Activated naive CD4-positive, alpha-beta T cell treated with anti-CD3 and anti-CD28 coated beads for 36 hours (primary cell): ENCODE measurements at regions of chr5 and their contacts with region 1.

Region 1: DNA sequence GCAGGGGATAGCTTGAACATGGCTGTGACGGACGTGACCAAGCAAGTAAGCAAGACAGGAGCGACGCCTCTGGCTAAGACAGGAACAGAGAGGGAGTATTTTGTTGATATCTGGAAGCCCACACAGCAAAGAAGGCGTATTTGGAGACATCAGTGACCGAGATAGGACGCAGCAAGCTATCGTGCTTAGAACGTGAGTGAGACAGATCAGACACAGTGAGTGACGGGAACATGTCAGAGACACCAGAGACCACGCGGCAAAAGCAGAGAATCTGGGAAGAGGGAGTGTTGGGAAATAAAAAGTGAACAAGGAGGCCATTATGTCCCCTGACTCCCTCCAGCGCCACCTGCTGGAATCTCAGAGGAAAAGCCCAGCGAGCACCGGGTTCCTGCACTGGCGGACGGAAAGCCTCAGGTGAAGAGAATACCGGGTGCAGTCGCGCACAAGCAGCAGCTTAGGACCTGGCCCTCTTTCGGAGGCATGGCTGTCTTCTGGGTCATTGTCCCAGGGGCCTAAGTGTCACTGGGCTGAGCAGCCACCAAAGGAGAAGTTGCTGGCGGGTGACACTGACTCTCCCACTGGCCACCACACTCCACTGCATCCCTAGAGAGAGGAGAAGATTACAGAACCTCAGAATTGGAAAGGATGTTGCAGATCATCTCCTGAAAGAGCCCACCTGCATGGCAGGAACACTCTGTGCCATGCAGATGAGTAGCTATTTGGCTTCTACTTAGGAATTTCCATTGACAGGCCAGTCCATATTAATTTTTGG is 99.1 kb downstream of the FBXO38 start:
- DNase-seq: peak; percentile 82
- H3K4me3 Mint-ChIP-seq: no peak overlapping the region
- H3K27ac Mint-ChIP-seq: no peak overlapping the region
- H3K4me1 Mint-ChIP-seq: peaks cover 3% of the 10 kb centered on the region
- H3K27me3 Mint-ChIP-seq: peaks cover 26% of the 10 kb centered on the region

Region 2: DNA sequence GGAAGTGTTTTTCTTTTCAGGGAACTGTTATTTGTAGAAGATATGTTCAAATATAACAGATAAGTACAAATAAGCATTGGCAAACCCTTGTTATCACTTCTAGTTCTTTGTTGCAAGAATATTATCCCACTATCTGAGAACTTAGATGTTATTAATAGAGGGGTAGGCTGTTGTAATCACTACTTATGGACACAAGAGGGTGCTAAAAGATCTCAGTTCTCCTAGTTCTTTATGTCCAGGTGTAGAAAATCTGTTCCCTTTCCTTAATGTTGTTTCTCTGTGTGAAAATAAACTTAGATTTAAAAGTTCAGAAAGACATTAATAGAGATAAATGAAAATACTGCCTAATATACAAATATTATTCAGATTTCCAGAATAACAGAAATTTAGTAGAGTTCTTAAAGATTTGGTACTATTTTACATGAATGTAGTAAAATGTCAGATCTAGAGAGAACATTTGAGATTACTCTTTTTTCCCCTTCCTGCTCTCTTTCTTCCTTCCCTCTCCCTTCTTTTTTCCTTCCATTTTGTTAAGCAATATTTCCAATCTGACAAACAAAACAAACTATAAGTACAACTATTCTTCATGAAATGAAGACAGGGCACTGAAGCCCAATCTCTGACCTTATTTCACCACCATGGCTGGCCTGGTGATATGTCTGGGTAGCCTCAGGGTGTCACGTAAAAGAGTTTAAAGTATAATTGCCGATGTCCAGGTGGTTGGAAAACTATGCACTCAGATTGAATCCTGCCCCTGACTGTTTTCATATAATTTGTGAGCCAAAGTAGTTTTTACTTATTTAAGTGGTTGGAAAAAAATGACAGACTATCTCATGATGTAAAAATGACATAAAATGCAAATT is 532.9 kb before region 1 on chr5:
- CTCF ChIA-PET with region 1: interaction called, 3 read pairs
- intact Hi-C with region 1: loop called (anchors 5 kb)
- DNase-seq: no peak
- H3K4me3 Mint-ChIP-seq: no peak overlapping the region
- H3K27ac Mint-ChIP-seq: no peak overlapping the region
- H3K4me1 Mint-ChIP-seq: no peaks in the 10 kb centered on the region
- H3K27me3 Mint-ChIP-seq: peaks cover 2% of the 10 kb centered on the region

Region 3: DNA sequence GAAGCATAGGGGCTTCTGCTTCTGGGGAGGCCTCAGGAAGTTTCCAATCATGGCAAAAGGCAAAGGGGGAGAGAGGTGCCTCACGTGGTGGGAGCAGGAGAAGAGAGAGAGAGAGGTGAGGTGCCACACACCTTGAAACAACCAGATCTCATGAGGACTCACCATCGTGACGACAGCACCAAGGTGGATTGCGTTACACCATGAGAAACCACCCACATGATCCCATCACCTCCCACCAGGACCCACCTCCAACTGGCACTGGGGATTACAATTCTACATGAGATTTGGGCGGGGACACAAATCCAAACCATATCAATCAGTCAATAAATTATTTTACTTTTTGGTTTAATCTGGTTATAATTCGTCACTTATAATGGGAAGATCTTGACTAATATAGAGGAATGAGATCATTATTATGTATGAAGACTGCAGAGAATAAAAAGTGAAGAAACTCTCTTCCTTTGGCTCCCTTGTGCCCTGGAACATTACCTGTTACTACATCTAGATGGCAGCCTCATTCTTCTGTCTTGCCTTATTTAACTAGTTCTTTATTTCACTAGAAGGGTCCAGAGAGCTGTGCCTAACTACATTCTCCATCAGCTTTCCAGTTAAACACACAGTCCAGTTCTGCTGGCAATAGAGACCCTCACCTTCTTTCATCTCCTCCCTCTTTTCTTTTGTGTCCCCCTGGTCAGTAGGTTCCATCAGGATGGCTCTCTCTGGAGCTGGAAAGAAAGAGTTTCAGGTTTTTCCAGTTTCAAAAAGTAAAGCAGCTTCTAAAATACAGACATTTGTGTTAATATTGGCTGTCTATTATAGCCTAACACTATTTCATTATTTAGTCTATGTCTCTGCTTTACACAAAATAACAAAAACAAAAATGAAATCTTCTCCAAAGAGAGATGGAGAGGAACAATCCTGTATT is 192.3 kb before region 1 on chr5:
- CTCF ChIA-PET with region 1: no interaction called
- intact Hi-C with region 1: loop called (anchors 1 kb)
- DNase-seq: no peak
- H3K4me3 Mint-ChIP-seq: no peak overlapping the region
- H3K27ac Mint-ChIP-seq: no peak overlapping the region
- H3K4me1 Mint-ChIP-seq: no peaks in the 10 kb centered on the region
- H3K27me3 Mint-ChIP-seq: no peaks in the 10 kb centered on the region

Region 4: GRCh38 chr5:148374692-148375360 is 108.1 kb before region 1 on chr5:
- CTCF ChIA-PET with region 1: no interaction called
- intact Hi-C with region 1: loop called (anchors 2 kb)
- DNase-seq: peak; percentile 29
- H3K4me3 Mint-ChIP-seq: no peak overlapping the region
- H3K27ac Mint-ChIP-seq: no peak overlapping the region
- H3K4me1 Mint-ChIP-seq: peaks cover 6% of the 10 kb centered on the region
- H3K27me3 Mint-ChIP-seq: no peaks in the 10 kb centered on the region

Region 5: DNA sequence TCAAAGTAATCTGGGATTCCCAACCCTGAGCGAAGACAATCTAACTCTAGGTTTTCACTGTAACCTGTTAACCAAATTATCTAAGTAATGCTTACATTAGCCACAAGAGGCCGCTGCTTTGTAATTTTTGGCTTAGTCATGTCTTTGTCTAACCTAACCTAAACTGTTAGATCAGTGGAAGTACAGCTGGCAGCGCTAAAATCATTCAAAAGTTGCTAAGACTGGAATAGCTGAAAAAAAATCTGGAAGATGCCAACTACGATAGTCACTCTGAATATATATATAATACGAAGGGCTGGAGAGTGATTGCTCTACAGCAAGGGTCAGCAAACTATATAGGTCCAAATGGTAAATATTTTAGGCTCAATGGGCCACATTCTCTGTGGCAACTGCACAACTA is 38.9 kb before region 1 on chr5:
- CTCF ChIA-PET with region 1: interaction called, 12 read pairs
- intact Hi-C with region 1: loop called (anchors 1 kb)
- DNase-seq: peak; percentile 67
- H3K4me3 Mint-ChIP-seq: no peak overlapping the region
- H3K27ac Mint-ChIP-seq: no peak overlapping the region
- H3K4me1 Mint-ChIP-seq: no peaks in the 10 kb centered on the region
- H3K27me3 Mint-ChIP-seq: no peaks in the 10 kb centered on the region

Region 6: DNA sequence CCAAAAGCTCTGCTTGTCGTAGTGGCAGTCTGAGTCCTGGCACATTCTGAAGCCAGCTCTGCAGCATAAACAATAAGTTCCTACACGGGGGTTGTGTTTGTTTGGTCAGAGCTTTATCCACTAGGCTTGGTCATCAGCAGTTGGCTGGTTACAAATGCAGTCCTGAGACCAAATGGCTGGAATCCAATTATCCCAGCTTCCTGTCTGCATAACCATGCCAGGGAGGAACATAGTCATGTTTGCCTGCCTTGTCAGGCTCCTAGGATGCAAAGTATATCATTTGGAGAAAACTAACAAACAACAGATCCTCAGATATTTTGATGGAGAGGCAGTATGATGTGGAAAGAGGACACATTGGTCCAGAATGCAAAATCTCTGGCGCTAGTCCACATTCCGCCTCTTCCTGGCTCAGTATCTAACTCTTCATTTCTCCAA is 13.4 kb before region 1 on chr5:
- CTCF ChIA-PET with region 1: interaction called, 20 read pairs
- intact Hi-C with region 1: no loop called
- DNase-seq: no peak
- H3K4me3 Mint-ChIP-seq: no peak overlapping the region
- H3K27ac Mint-ChIP-seq: no peak overlapping the region
- H3K4me1 Mint-ChIP-seq: no peaks in the 10 kb centered on the region
- H3K27me3 Mint-ChIP-seq: no peaks in the 10 kb centered on the region

Region 7: GRCh38 chr5:148574167-148574566 is 91.3 kb after region 1 on chr5:
- CTCF ChIA-PET with region 1: no interaction called
- intact Hi-C with region 1: no loop called
- DNase-seq: no peak
- H3K4me3 Mint-ChIP-seq: no peak overlapping the region
- H3K27ac Mint-ChIP-seq: no peak overlapping the region
- H3K4me1 Mint-ChIP-seq: no peaks in the 10 kb centered on the region
- H3K27me3 Mint-ChIP-seq: peaks cover 22% of the 10 kb centered on the region